Dorsolateral prefrontal cortex (tissue), 120 donors: ENCODE measurements at regions of chr15 and their contacts with region 1.

Region 1: DNA sequence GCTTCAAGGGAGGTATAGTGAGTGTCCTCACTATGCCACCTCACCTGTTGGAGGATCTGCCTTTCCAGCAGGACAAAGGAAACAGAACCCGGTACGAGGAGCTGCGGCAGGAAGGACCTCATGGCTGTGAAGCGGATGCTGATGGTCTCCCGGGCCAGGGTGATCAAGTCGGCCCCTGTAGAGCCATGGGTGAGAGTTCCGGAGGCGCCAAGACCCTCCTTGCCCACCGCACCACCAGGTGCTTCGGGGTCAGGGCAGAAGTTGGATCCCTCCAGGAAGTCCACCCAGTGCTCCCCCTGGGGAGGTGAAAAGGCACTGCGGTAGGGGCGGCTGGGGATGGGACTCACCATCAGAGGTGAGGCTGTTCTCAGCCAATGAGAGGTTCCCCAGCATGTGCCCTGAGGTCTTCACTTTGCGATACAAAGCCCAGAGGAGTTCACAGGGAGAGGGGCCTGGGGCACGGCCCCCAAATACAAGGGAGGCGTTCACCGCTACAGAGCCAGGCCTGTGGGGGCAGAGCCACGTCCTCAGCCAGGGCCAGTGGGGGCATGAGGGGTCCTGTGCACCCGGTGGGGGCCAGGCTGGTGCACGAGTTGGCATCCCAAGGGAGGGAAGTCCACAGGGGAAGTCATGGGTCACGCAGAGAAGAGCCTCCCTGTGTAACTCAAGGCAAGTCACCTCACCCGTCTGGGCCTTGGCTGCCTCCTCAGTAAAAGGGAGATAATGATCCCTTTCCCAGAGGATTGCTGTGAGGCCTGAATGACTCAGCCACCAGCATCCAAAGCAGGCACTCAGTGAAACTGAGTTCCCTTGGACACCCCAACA is 27.7 kb downstream of the C15orf39 start:
- DNase-seq: peak in 1 of 10 donors; percentile 34
- H3K4me3 ChIP-seq: no peak overlapping the region
- H3K27ac ChIP-seq: no peak overlapping the region
- H3K27me3 ChIP-seq: peaks cover 0 to 29% (median 0%) of the 10 kb centered on the region in 45 donors
- CTCF ChIP-seq: no peak

Region 2: DNA sequence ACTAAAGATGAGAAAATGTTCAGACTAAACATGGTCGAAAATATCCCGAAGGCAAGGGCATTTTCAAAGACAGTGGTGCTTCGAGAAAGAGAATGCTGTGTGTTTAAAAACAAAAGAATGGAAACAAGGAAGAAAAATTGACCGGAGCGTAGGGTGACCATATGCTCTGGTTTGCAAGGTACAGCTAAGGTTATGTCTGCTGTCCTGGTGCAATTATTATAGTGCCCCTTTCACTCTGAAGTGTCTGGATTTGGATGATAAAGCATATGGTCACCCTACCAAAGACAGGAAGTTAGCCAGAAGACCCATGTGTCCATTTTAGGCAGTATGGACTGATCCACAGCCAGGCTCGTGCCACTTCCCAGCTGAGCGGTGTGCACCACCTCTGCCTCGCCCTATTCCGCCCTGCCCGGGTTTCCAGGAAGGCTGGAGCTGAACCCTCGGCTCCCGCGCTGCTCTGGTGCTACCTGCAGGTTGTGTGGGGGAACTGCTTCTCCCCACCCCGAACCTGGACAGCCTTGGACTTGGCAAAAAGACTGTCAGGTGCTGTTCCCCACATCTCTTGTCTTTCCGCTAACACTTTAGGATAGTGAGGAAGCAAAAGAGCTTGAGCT is 78.5 kb after region 1 on chr15:
- intact Hi-C with region 1: loop called in 1 of 2 experiments (anchors 10 kb)
- DNase-seq: peak in 1 of 10 donors; percentile 6
- H3K4me3 ChIP-seq: no peak overlapping the region
- H3K27ac ChIP-seq: no peak overlapping the region
- H3K27me3 ChIP-seq: peaks cover 0 to 32% (median 5%) of the 10 kb centered on the region in 45 donors
- CTCF ChIP-seq: peak in 10 of 56 donors; percentile 9 to 35 (median 18)